ENCODE measurements at regions of chr7 and their contacts with region 1.

Region 1: DNA sequence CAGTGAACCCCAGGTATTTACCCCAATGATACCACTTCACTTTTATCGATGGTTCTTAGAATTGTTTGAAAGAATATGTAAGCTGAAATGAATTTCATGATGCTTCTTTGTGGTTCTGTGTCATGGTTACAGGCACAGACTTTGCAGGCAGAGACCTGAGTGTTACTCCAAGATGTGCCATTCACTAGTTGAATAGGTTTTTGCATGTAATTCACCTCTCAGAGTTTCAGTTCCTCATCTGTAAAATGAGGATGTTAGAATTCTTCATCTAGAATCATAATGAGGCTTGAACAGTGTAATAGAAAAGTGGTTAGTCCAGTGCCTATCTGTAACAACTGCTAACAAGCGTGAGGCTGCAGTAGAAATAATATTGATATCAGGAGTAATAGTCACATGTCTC is 54.6 kb downstream of the VSTM2A start:
- DNase-seq: no peak
- ATAC-seq: no peak
- H3K4me3 ChIP-seq: no peak overlapping the region
- H3K4me3 Mint-ChIP-seq: no peak overlapping the region
- H3K27ac ChIP-seq: no peak overlapping the region
- H3K27ac Mint-ChIP-seq: no peak overlapping the region
- H3K4me1 ChIP-seq: no peaks in the 10 kb centered on the region
- H3K4me1 Mint-ChIP-seq: no peaks in the 10 kb centered on the region
- H3K27me3 ChIP-seq: no peaks in the 10 kb centered on the region
- H3K27me3 Mint-ChIP-seq: no peaks in the 10 kb centered on the region
- CTCF ChIP-seq: no peak

Region 2: GRCh38 chr7:54538122-54538521 is 58.6 kb before region 1 on chr7:
- CTCF ChIA-PET with region 1: no interaction called
- POLR2A ChIA-PET with region 1: no interaction called
- intact Hi-C with region 1: loop called in 1 of 2 experiments (anchors 10 kb)
- DNase-seq: no peak
- ATAC-seq: no peak
- H3K4me3 ChIP-seq: no peak overlapping the region
- H3K4me3 Mint-ChIP-seq: no peak overlapping the region
- H3K27ac ChIP-seq: no peak overlapping the region
- H3K27ac Mint-ChIP-seq: no peak overlapping the region
- H3K4me1 ChIP-seq: no peaks in the 10 kb centered on the region
- H3K4me1 Mint-ChIP-seq: no peaks in the 10 kb centered on the region
- H3K27me3 ChIP-seq: peaks cover 11 to 22% of the 10 kb centered on the region in 2 experiments
- H3K27me3 Mint-ChIP-seq: peaks cover 18% of the 10 kb centered on the region
- CTCF ChIP-seq: no peak